CD4-positive, alpha-beta T cell (primary cell): ENCODE measurements at regions of chr3 and their contacts with region 1.

Region 1: DNA sequence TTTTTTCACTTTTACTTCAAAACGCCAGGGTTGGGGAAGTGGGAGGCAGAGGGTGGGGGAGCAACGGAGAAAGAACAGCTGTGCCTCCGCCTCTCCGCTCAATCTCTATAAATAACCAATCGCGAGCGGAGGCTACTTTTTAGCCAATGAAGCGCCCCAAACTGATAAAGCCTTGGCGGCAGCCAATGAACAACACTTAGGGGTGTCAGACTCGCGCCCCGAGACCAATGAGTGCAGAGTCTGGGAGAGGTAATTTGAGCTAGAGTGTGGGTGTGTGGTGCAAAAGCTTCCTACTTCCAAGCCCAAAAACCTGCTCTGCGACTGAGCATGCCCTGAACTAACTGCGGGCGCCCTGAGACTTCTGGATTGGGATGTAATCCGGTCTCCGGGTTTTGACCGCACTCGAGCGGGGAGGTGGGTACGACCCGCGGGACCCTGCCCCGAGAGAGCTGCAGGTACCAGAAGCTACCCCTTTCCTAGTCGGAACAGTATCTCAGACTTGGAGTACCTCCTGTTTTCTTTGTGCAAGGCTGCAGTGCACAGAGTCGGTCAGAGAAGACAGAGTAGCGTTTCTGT is 800 bp upstream of the RAP2B start:
- DNase-seq: peak; percentile 77 to 98 (median 85)
- ATAC-seq: peak; percentile 82
- H3K4me3 ChIP-seq: peak overlapping the region; percentile 94
- H3K4me3 Mint-ChIP-seq: peak overlapping the region; percentile 100
- H3K27ac ChIP-seq: peak overlapping the region; percentile 66 to 76
- H3K27ac Mint-ChIP-seq: peak overlapping the region; percentile 95
- H3K4me1 ChIP-seq: peaks cover 18% of the 10 kb centered on the region
- H3K4me1 Mint-ChIP-seq: peaks cover 50% of the 10 kb centered on the region
- H3K27me3 ChIP-seq: no peaks in the 10 kb centered on the region
- H3K27me3 Mint-ChIP-seq: no peaks in the 10 kb centered on the region
- CTCF ChIP-seq: no peak

Region 2: DNA sequence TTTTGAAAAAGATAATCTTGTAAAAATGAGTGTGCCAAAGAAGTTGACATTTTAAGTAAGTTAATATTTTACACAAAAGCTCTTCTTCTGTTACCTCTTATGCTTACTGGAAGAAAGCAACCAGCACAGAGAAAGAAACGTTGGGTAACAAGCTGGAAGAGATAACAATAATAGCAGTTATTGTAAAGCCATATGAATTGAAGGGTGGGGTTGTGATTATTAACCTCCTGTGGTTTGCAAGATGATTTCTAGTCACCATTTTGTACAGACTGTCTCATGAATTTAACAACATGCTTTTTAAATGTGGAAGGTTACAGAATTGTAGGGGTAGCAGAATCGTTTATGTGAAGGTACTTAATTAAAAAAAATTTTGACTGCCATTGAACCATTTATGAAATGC is 10.0 kb after region 1 on chr3:
- CTCF ChIA-PET with region 1: no interaction called
- POLR2A ChIA-PET with region 1: interaction called, 11 read pairs
- intact Hi-C with region 1: no loop called
- DNase-seq: no peak
- ATAC-seq: no peak
- H3K4me3 ChIP-seq: no peak overlapping the region
- H3K4me3 Mint-ChIP-seq: no peak overlapping the region
- H3K27ac ChIP-seq: no peak overlapping the region
- H3K27ac Mint-ChIP-seq: peak overlapping the region; percentile 4
- H3K4me1 ChIP-seq: peaks cover 13% of the 10 kb centered on the region
- H3K4me1 Mint-ChIP-seq: peaks cover 48% of the 10 kb centered on the region
- H3K27me3 ChIP-seq: no peaks in the 10 kb centered on the region
- H3K27me3 Mint-ChIP-seq: no peaks in the 10 kb centered on the region
- CTCF ChIP-seq: no peak

Region 3: DNA sequence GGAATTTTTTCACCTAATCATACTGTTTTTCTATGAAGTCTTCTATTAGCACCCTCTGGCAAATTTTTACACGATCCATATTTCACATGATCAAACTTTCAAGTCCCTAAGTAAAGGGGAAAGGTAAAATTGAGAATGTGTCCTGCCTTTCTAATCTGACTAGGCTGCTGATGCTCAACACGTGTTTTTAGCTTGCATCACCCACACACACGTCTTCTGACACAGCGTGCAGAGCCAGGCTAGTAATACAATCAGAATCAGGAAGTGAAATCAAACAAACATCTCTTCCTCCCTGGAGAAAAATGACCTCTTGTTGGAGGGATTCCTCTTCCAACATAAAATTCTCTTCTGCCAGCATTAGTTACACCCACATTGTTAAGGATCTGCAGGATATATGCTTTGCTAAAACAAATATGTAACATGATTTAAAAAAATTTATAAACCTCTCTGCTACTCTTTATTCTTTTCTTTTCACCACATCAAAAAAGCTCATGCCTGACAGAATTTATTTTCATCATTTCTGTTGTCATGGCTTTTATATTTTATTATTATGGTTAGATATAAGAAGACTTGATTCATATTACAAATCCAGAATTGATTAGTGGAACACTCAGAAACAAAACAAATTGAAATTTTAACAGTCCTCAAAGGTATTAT is 123.2 kb after region 1 on chr3:
- CTCF ChIA-PET with region 1: interaction called, 5 read pairs
- POLR2A ChIA-PET with region 1: interaction called, 12 read pairs
- intact Hi-C with region 1: no loop called
- DNase-seq: peak in 8 of 14 experiments; percentile 16 to 75 (median 40)
- ATAC-seq: peak; percentile 86
- H3K4me3 ChIP-seq: no peak overlapping the region
- H3K4me3 Mint-ChIP-seq: peak overlapping the region; percentile 43
- H3K27ac ChIP-seq: no peak overlapping the region
- H3K27ac Mint-ChIP-seq: peak overlapping the region; percentile 78
- H3K4me1 ChIP-seq: peaks cover 18% of the 10 kb centered on the region
- H3K4me1 Mint-ChIP-seq: peaks cover 46% of the 10 kb centered on the region
- H3K27me3 ChIP-seq: no peaks in the 10 kb centered on the region
- H3K27me3 Mint-ChIP-seq: no peaks in the 10 kb centered on the region
- CTCF ChIP-seq: no peak

Region 4: GRCh38 chr3:153456831-153457545 is 295.8 kb after region 1 on chr3:
- CTCF ChIA-PET with region 1: no interaction called
- POLR2A ChIA-PET with region 1: interaction called, 12 read pairs
- intact Hi-C with region 1: loop called in 1 of 2 experiments (anchors 10 kb)
- DNase-seq: no peak
- ATAC-seq: no peak
- H3K4me3 ChIP-seq: no peak overlapping the region
- H3K4me3 Mint-ChIP-seq: no peak overlapping the region
- H3K27ac ChIP-seq: no peak overlapping the region
- H3K27ac Mint-ChIP-seq: no peak overlapping the region
- H3K4me1 ChIP-seq: peaks cover 2% of the 10 kb centered on the region
- H3K4me1 Mint-ChIP-seq: peaks cover 24% of the 10 kb centered on the region
- H3K27me3 ChIP-seq: no peaks in the 10 kb centered on the region
- H3K27me3 Mint-ChIP-seq: no peaks in the 10 kb centered on the region
- CTCF ChIP-seq: no peak

Region 5: DNA sequence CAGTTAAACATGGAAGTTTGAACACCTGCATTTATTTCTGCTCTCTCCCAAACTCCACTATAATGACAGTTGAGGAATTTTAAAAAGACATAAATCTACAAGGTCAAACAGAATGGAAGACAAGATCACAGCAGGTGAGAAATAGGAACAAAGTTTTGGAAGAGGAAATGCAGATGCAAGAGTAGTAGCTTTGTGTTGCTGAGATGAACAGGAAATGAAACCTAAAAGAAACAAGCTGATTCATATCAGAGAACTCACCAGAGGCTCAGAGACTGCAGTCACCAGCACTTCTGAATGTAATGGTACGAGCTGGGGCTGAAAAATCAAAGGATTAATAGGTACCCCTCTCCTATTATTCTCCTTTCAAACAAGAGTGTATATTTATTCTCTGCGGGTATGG is 460.7 kb after region 1 on chr3:
- CTCF ChIA-PET with region 1: no interaction called
- POLR2A ChIA-PET with region 1: interaction called, 16 read pairs
- intact Hi-C with region 1: loop called (anchors 10 kb)
- DNase-seq: peak in 4 of 14 experiments; percentile 28 to 72 (median 42)
- ATAC-seq: peak; percentile 34
- H3K4me3 ChIP-seq: no peak overlapping the region
- H3K4me3 Mint-ChIP-seq: peak overlapping the region; percentile 79
- H3K27ac ChIP-seq: peak overlapping the region in 1 of 2 donors; percentile 17
- H3K27ac Mint-ChIP-seq: peak overlapping the region; percentile 89
- H3K4me1 ChIP-seq: peaks cover 17% of the 10 kb centered on the region
- H3K4me1 Mint-ChIP-seq: peaks cover 57% of the 10 kb centered on the region
- H3K27me3 ChIP-seq: no peaks in the 10 kb centered on the region
- H3K27me3 Mint-ChIP-seq: no peaks in the 10 kb centered on the region
- CTCF ChIP-seq: no peak

Region 6: DNA sequence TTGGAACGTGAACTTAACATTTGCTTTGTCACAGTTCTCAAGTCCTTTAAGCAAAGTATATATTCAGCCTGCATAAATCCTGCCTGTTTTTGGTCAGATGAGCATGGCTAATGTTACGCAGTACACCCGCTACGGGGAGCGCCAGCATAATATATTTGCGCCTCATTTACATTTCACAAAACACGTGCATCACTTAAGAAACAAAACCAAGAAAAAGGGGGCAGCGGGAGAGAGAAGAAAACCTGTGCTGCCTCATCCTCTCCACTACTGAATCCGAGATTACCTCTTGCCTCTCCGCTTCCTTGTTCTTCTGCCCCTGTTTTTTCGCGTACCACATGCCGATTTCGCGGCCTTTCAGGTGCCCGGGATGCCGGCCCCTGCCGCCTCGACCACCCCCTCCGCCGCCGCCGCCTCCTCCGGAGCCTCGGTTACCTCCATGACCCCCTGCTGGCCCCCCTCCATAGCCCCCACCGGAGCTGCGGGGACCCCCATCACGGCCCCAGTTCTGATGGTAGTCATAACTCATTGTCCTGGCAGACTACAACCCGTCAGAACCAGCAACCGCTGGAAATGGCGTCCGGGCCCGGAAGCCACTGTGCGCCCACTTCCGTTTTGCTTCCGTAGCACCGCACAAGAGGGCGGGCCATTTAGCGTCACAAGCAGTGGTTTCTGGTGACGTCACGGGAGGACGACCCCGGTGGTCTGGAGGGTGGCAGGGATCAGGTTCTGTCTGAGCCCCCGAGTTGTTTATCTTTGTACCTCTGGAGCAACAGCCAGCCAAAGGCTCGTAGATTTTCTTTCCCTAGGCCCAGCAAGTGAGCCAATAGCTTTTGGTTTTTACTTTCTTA is 1162.9 kb after region 1 on chr3 and contains the start of gene DHX36:
- CTCF ChIA-PET with region 1: no interaction called
- POLR2A ChIA-PET with region 1: interaction called, 9 read pairs
- intact Hi-C with region 1: loop called (anchors 5 kb)
- DNase-seq: peak; percentile 77 to 95 (median 86)
- ATAC-seq: peak; percentile 89
- H3K4me3 ChIP-seq: peak within 1 kb of the TSS; percentile 84
- H3K4me3 Mint-ChIP-seq: peak within 1 kb of the TSS; percentile 96
- H3K27ac ChIP-seq: peak within 1 kb of the TSS; percentile 96 to 97
- H3K27ac Mint-ChIP-seq: peak within 1 kb of the TSS; percentile 99
- H3K4me1 ChIP-seq: peaks cover 39% of the 10 kb centered on the region
- H3K4me1 Mint-ChIP-seq: peaks cover 16% of the 10 kb centered on the region
- H3K27me3 ChIP-seq: no peaks in the 10 kb centered on the region
- H3K27me3 Mint-ChIP-seq: no peaks in the 10 kb centered on the region
- CTCF ChIP-seq: no peak
- total RNA-seq, gene DHX36: 128 TPM